GM12878 (cell line): ENCODE measurements at regions of chr19 and their contacts with region 1.

Region 1: DNA sequence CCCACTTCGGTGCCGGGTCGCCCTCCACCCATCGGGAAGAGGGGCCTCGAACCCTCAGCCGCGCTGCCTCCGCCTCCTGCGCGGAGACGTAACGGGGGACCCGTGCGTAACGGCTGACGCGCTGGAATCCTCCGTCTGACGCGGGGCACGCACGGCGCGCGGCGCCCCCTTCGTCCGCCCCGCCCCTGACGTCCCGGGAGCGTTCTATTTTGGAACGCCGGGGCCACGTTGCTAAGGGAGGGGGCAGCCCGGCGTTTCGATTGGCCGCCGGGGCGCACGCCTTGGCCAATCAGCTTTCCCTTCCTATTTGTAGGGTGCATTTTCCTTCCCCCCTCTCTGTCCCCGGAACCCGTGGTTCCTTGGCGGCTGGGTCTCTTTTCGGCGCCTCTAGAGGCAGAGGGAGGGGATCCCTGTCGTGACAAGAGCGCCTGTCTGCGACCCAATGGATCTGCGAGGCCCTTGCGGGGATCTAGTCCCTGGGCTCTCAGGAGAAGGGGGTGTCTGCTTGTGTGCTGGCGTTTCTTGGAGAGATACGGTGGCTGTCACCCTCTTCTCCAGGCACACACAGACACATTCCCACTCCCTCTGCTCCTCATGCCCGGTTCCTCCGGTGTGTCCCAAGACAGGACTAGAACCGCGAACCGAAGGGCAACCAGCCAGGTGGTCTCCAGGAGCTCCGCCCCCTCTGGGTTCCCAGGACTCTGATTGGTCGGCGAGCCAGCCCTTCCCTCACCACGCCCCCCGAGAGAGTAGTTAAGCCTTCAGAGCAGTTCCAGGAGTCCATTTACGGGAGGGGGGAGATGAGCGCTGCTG is 1.5 kb downstream of the FOSB start:
- DNase-seq: peak; percentile 78
- ATAC-seq: peak; percentile 87
- H3K4me3 ChIP-seq: peak overlapping the region; percentile 82
- H3K27ac ChIP-seq: peak overlapping the region; percentile 91
- H3K4me1 ChIP-seq: peaks cover 14% of the 10 kb centered on the region
- H3K27me3 ChIP-seq: peaks cover 0 to 2% of the 10 kb centered on the region in 2 experiments; a peak in 2 of 4 replicates
- CTCF ChIP-seq: no peak
- EP300 ChIP-seq: peak in 1 of 2 experiments; percentile 11; a peak in 1 of 4 replicates
- POLR2A ChIP-seq: peak; percentile 79
- RAD21 ChIP-seq: no peak

Region 2: GRCh38 chr19:45446320-45446763 is 23.0 kb before region 1 on chr19:
- CTCF ChIA-PET with region 1: interaction called, 385 read pairs
- POLR2A ChIA-PET with region 1: interaction called, 13 read pairs
- RAD21 ChIA-PET with region 1: interaction called, 64 read pairs
- SMC1A ChIA-PET with region 1: interaction called, 52 read pairs
- in situ Hi-C with region 1: no loop called
- intact Hi-C with region 1: loop called (anchors 2 kb)
- DNase-seq: no peak
- ATAC-seq: no peak
- H3K4me3 ChIP-seq: no peak overlapping the region
- H3K27ac ChIP-seq: no peak overlapping the region
- H3K4me1 ChIP-seq: peaks cover 29% of the 10 kb centered on the region
- H3K27me3 ChIP-seq: no peaks in the 10 kb centered on the region
- CTCF ChIP-seq: peak; percentile 53 to 64 (median 60)
- EP300 ChIP-seq: no peak
- POLR2A ChIP-seq: no peak
- RAD21 ChIP-seq: no peak

Region 3: GRCh38 chr19:45455707-45456499 is 13.4 kb before region 1 on chr19:
- CTCF ChIA-PET with region 1: interaction called, 15 read pairs
- POLR2A ChIA-PET with region 1: interaction called, 7 read pairs
- RAD21 ChIA-PET with region 1: interaction called, 13 read pairs
- SMC1A ChIA-PET with region 1: interaction called, 4 read pairs
- in situ Hi-C with region 1: no loop called
- intact Hi-C with region 1: loop called (anchors 2 kb)
- DNase-seq: no peak
- ATAC-seq: peak; percentile 86
- H3K4me3 ChIP-seq: no peak overlapping the region
- H3K27ac ChIP-seq: peak overlapping the region; percentile 33
- H3K4me1 ChIP-seq: peaks cover 33% of the 10 kb centered on the region
- H3K27me3 ChIP-seq: no peaks in the 10 kb centered on the region
- CTCF ChIP-seq: no peak
- EP300 ChIP-seq: no peak
- POLR2A ChIP-seq: no peak
- RAD21 ChIP-seq: no peak

Region 4: DNA sequence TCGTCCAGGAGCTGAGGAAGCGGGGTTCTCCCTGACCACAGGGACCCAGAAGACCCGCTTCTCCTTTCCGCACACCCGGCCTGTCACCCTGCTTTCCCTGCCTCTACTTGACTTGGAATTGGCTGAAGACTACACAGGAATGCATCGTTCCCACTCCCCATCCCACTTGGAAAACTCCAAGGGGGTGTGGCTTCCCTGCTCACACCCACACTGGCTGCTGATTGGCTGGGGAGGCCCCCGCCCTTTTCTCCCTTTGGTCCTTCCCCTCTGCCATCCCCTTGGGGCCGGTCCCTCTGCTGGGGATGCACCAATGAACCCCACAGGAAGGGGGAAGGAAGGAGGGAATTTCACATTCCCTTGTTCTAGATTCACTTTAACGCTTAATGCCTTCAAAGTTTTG is 56.8 kb after region 1 on chr19:
- CTCF ChIA-PET with region 1: no interaction called
- POLR2A ChIA-PET with region 1: no interaction called
- RAD21 ChIA-PET with region 1: no interaction called
- SMC1A ChIA-PET with region 1: no interaction called
- in situ Hi-C with region 1: no loop called
- intact Hi-C with region 1: no loop called
- DNase-seq: no peak
- ATAC-seq: peak; percentile 31; the same call in 2 of the 3 replicates
- H3K4me3 ChIP-seq: no peak overlapping the region
- H3K27ac ChIP-seq: no peak overlapping the region
- H3K4me1 ChIP-seq: peaks cover 10% of the 10 kb centered on the region; the same call in 1 of the 2 replicates
- H3K27me3 ChIP-seq: no peaks in the 10 kb centered on the region
- CTCF ChIP-seq: no peak
- EP300 ChIP-seq: no peak
- POLR2A ChIP-seq: no peak; the same call in 1 of the 2 replicates
- RAD21 ChIP-seq: no peak